RWPE1 (cell line): ENCODE measurements at regions of chr5 and their contacts with region 1.

Region 1: DNA sequence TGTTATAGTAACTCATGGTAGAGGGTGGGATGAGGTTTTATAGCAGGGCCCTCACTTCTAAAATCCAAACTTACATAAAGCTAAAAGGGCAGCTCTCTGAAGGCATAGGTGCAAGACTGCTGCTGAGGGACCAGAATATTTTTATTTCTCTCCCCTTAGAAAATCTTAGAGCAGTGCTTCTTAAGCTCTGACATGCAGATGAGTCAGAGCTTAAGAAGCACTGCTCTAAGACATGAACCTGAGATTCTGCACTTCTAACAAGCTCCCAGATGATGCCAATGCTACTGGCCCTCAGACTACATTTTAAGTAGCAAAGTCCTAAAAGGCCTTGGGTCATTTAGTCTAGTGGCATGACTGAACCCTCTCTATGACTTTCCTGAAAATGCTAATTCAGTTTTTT is 97.6 kb upstream of the SPRY4 start:
- DNase-seq: peak; percentile 56
- H3K27ac ChIP-seq: no peak overlapping the region
- CTCF ChIP-seq: no peak

Region 2: GRCh38 chr5:142387033-142387682 is 35.3 kb before region 1 on chr5:
- CTCF ChIA-PET with region 1: no interaction called
- POLR2A ChIA-PET with region 1: interaction called, 11 read pairs
- DNase-seq: no peak
- H3K27ac ChIP-seq: no peak overlapping the region
- CTCF ChIP-seq: no peak

Region 3: DNA sequence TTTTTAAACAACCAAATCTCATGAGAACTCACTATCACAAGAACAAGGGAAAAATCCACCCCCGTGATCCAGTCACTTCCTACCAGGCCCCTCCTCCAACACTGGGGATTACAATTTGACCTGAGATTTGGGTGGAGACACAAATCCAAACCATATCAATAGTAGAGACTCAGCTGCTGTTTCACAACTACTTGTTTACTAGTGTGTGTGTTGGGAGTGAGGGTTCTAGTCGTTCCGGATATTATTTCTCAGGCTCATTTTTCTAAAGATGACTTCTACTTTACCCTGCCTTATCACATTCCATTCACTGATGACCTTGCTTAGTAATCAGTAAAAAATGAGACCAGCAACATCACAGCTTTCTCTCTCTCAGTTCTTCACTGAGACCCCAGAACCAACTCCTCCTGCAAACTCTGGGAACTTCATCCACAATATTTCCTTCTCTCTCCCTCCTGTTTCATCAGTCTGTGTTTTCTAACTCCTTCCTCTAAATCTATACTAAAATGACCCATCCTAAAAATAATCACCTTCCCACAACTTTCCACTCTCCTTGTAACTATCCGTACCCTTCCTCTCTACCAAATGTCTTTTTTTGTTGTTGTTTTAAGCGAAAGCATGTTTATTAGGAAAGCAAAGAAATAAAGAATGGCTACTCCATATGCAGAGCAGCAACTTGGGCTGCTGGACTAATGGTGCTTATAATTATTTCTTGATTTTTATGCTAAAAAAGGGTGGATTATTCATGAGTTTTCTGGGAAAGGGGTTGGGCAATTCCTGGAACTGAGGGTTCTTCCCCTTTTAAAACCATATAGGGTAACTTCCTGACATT is 23.9 kb after region 1 on chr5:
- CTCF ChIA-PET with region 1: no interaction called
- POLR2A ChIA-PET with region 1: no interaction called
- DNase-seq: peak; percentile 59
- H3K27ac ChIP-seq: no peak overlapping the region
- CTCF ChIP-seq: no peak